Posterior cingulate gyrus (tissue), 11 donors: ENCODE measurements at regions of chr14 and their contacts with region 1.

Region 1: DNA sequence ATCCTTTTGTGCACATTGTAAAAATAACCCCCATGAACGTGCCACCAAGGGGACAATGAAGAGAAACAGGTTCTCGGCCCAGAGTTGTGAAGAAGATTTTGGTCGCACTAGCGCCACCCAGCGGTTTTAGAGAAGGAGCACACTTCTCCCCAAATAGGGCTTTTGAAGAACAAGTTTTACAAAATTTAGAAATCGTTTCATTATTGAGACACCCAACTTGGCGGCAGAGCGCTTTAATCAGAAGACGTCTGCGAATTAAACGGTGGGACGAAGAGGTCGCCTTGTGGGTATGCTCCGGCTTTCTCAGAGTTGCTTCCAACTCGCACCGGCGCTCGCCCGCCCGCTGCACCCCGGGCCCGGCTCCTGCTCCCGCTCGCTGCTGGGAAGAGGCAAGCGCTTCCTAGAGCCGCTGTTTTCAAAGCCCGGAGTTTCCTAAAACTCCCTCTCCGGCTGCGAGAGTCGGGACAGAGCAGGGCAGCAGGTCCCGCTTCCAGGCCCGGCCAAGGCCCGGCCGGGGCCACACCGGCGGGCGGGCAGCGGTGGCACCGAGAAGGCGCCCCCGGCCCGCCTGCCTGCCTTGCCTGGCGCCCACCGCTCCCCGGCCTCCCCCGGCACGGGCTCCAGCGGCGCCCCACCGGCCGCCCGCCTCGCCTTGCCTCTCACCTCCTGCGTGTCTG is 673 bp downstream of the FOXA1 start:
- DNase-seq: peak in 1 of 10 donors; percentile 23

Region 2: DNA sequence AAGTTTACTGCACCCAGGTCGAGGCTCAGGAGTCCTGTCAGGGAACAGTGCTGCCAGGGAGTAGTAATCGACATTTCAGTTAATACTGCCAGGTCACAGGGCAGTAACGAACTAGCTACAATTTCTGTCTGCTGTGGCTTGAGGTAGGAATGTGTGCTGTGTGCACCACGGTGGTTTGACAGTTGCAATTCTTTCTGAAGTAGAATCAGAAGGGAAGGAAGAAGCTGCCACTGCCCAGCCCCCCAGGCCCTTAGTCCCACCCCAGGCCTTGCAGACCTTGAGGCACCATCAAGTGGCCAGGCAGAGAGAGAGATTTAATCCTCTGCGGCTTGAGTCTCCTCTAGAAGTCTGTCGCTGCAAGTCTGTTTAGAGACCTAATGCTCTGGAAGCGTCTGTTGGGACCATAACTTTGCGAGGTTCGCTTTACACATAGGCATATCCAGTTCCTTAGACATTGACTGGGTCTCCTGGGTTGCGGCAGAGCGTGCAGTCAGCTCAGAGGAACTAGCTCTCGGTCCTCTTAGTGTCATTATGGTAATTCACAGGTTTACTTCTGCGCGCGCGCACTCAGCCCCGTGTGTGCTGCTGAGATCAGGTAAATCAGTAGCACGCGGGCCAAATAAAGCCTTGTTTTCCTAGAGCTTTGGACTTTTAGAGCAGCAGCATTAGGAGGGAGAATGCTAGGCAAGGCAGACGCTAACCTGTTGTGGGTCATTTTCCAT is 1084.1 kb before region 1 on chr14:
- intact Hi-C with region 1: loop called (anchors 5 kb)
- DNase-seq: no peak

Region 3: DNA sequence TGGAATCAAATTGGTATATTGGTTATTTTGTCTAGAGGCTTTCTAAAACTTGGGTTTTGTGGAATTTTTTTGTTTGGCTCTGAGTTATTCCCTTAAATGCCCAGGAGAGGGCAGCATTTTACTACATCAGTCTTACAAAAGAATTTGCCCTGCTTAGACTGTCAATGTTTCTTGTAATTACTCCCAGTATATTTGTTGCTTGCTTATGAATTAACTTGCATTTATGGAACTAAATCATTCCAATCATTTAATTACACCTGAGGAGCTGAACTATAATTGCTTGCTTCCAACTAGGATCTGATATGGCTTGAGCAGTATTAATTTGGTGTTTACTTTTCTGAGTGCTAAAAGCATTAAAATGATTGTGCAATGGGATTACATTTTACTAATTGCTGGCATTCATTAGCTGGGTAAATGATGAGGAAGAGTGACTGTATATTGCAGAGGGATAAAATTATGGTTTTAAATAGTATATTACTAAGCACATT is 347.9 kb before region 1 on chr14:
- intact Hi-C with region 1: loop called (anchors 10 kb)
- DNase-seq: no peak

Region 4: DNA sequence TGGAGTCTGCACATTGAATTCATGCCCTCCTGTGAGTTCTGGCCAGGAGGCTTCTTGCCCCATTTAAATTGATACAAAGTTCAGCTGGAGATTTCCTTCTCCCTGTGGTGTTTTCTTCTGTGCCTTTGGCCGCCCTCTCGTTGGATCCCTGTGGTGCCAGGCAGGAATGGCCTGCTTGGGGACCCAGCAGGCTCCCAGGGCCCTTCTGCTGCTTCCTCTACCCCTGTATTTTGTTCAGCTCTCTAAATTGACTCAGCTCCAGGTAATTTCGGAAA is 196.5 kb before region 1 on chr14:
- intact Hi-C with region 1: no loop called
- DNase-seq: no peak

Region 5: DNA sequence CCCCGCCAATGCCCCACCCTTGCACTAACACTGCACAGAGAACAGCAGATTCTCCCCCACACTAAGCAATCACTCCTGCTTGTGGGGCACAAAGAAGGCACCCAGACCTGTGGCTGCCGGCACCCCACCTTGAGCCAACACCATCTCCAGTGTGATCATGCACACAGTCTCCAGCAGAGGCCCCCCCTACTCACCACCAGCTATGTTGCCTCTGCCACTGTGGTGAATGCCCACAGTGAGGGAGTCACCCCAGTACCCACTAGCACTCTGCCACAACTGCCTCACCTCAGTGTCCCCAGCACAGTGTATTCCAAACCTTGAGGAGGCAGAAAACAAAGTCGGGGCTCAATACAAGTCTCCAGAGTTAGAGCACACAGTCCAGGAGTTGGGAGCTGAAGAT is 351.6 kb after region 1 on chr14:
- intact Hi-C with region 1: no loop called
- DNase-seq: no peak